PC-3 (cell line): ENCODE measurements at regions of chr18 and their contacts with region 1.

Region 1: DNA sequence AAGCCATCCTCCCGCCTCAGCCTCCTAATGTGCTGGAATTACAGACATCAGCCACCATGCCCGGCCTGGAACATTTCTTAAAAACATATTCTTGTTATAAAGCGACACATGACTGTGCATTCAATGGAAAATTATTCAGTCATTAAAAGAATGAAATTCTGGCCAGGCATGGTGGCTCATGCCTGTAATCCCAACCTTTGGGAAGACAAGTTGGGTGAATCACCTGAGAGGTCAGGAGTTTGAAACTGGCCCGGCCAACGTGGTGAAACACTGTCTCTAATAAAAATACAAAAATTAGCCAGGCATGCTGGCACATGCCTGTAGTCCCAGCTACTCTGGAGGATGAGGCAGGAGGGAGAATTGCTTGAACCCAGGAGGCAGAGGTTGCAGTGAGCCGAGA is 21.6 kb upstream of the RPRD1A start:
- DNase-seq: no peak
- ATAC-seq: no peak
- H3K4me3 ChIP-seq: no peak overlapping the region
- H3K27ac ChIP-seq: no peak overlapping the region
- H3K4me1 ChIP-seq: no peaks in the 10 kb centered on the region
- H3K27me3 ChIP-seq: no peaks in the 10 kb centered on the region
- CTCF ChIP-seq: no peak

Region 2: DNA sequence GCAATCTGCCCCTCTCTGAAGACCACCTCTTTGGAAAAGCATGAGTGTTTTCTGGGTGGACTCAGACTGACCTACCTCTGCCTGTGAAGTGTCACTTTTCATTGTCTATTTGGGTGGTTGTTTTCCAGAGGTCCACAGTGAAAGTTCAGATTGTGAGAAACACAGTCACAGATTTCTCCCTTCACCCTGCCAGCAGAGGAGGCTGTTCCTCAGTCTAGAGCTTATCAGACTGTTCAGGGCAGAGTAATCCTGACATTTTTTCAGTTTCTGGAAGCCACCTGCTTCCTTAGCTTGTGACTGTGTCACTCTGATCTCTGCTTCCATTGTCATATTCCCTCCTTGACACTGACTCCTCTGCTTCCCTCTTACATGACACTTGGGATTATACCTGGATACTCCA is 172.0 kb before region 1 on chr18:
- CTCF ChIA-PET with region 1: no interaction called
- POLR2A ChIA-PET with region 1: no interaction called
- intact Hi-C with region 1: no loop called
- DNase-seq: peak; percentile 2
- ATAC-seq: no peak
- H3K4me3 ChIP-seq: no peak overlapping the region
- H3K27ac ChIP-seq: no peak overlapping the region
- H3K4me1 ChIP-seq: no peaks in the 10 kb centered on the region
- H3K27me3 ChIP-seq: 0 out of 2 replicates have a peak, but pooled peaks cover 3% of the 10 kb centered on the region
- CTCF ChIP-seq: peak; percentile 40

Region 3: DNA sequence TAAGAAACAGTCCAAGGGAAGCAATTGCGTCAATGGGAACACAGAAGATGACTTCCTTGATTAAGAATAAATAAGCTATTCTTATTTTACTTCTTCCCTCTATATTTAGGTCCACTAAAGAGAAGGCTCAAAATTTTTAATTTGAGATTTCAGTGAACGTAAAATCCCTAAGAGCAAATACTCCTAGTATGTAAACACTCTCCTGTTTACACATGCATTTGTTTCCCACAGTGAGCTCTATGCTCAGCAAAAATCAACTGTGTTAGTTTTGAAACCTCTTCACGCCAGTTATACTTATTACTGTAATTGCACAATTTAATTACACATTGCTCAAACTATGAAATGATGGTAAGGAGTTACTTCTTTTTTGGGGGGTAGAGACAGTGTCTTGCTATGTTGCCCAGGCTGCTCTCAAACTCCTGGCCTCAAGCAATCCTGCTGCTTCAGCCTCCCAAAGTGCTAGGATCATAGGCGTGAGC is 31.3 kb after region 1 on chr18:
- CTCF ChIA-PET with region 1: no interaction called
- POLR2A ChIA-PET with region 1: no interaction called
- intact Hi-C with region 1: no loop called
- DNase-seq: no peak
- ATAC-seq: no peak
- H3K4me3 ChIP-seq: no peak overlapping the region
- H3K27ac ChIP-seq: no peak overlapping the region
- H3K4me1 ChIP-seq: no peaks in the 10 kb centered on the region
- H3K27me3 ChIP-seq: no peaks in the 10 kb centered on the region
- CTCF ChIP-seq: no peak

Region 4: GRCh38 chr18:36279001-36279400 is 190.0 kb after region 1 on chr18:
- CTCF ChIA-PET with region 1: no interaction called
- POLR2A ChIA-PET with region 1: no interaction called
- intact Hi-C with region 1: loop called (anchors 2 kb)
- DNase-seq: no peak
- ATAC-seq: no peak
- H3K4me3 ChIP-seq: no peak overlapping the region
- H3K27ac ChIP-seq: no peak overlapping the region
- H3K4me1 ChIP-seq: no peaks in the 10 kb centered on the region
- H3K27me3 ChIP-seq: no peaks in the 10 kb centered on the region
- CTCF ChIP-seq: no peak

Region 5: DNA sequence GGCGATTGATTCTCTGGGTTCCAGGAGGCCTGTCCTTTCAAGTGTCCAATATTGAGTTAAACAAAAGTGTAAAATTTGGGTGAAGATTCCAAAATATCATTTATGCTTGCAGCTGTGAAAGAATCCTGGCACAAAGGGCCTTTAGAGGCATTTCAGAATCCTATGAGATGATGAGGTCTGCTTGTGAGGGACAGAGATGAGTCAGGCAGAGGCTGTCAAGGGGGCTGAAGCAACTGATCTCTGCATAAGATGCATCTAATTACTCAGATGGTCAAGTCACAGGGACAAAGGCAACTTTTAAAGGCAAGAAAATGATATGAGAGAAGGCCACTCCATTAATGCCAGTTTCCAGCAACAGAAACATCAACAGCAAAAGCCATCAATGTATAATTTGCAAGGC is 287.4 kb after region 1 on chr18:
- CTCF ChIA-PET with region 1: no interaction called
- POLR2A ChIA-PET with region 1: no interaction called
- intact Hi-C with region 1: no loop called
- DNase-seq: no peak
- ATAC-seq: no peak
- H3K4me3 ChIP-seq: no peak overlapping the region
- H3K27ac ChIP-seq: no peak overlapping the region
- H3K4me1 ChIP-seq: peaks cover 16% of the 10 kb centered on the region
- H3K27me3 ChIP-seq: no peaks in the 10 kb centered on the region
- CTCF ChIP-seq: no peak